CD8-positive, alpha-beta memory T cell (primary cell): ENCODE measurements at regions of chr9 and their contacts with region 1.

Region 1: GRCh38 chr9:113591001-113591898 is 127.7 kb downstream of the RGS3 start:
- DNase-seq: peak in 4 of 5 donors; percentile 17 to 49 (median 30)
- H3K4me3 ChIP-seq: no peak overlapping the region
- H3K4me3 Mint-ChIP-seq: no peak overlapping the region
- H3K27ac ChIP-seq: no peak overlapping the region
- H3K27ac Mint-ChIP-seq: peak overlapping the region in 5 of 8 donors; percentile 47 to 74 (median 66)
- H3K4me1 ChIP-seq: peaks cover 4% of the 10 kb centered on the region
- H3K4me1 Mint-ChIP-seq: peaks cover 20 to 35% (median 29%) of the 10 kb centered on the region in 3 donors
- H3K27me3 ChIP-seq: no peaks in the 10 kb centered on the region
- H3K27me3 Mint-ChIP-seq: no peaks in the 10 kb centered on the region

Region 2: DNA sequence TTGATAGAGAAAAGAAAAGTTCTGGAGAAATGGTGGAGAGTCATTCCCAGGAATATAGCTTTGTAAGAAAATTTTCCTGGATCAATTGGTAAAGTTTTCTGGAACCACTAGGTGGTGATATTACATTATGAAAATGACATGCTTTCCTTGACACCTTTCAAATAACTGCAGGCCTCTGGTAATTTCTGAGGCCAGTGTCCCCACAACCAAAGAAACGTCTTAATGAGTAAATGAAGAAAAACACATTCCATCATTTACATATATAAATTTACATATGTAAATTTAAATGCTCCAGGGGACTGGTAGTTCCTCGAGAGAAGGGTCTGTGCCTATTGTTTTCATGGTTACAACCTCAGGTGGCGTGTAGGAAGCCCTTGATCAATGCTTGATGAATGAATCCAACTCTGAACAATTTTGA is 144.9 kb before region 1 on chr9:
- CTCF ChIA-PET with region 1: interaction called, 45 read pairs
- POLR2A ChIA-PET with region 1: no interaction called
- DNase-seq: peak in 2 of 5 donors; percentile 34 to 40
- H3K4me3 ChIP-seq: no peak overlapping the region
- H3K4me3 Mint-ChIP-seq: no peak overlapping the region
- H3K27ac ChIP-seq: no peak overlapping the region
- H3K27ac Mint-ChIP-seq: no peak overlapping the region
- H3K4me1 ChIP-seq: no peaks in the 10 kb centered on the region
- H3K4me1 Mint-ChIP-seq: no peaks in the 10 kb centered on the region
- H3K27me3 ChIP-seq: no peaks in the 10 kb centered on the region
- H3K27me3 Mint-ChIP-seq: peaks cover 1 to 3% of the 10 kb centered on the region in 2 donors

Region 3: GRCh38 chr9:113622600-113623400 is 31.6 kb after region 1 on chr9:
- CTCF ChIA-PET with region 1: no interaction called
- POLR2A ChIA-PET with region 1: no interaction called
- DNase-seq: no peak
- H3K4me3 ChIP-seq: no peak overlapping the region
- H3K4me3 Mint-ChIP-seq: no peak overlapping the region
- H3K27ac ChIP-seq: no peak overlapping the region
- H3K27ac Mint-ChIP-seq: no peak overlapping the region
- H3K4me1 ChIP-seq: no peaks in the 10 kb centered on the region
- H3K4me1 Mint-ChIP-seq: no peaks in the 10 kb centered on the region
- H3K27me3 ChIP-seq: no peaks in the 10 kb centered on the region
- H3K27me3 Mint-ChIP-seq: peaks cover 19 to 21% of the 10 kb centered on the region in 2 donors

Region 4: DNA sequence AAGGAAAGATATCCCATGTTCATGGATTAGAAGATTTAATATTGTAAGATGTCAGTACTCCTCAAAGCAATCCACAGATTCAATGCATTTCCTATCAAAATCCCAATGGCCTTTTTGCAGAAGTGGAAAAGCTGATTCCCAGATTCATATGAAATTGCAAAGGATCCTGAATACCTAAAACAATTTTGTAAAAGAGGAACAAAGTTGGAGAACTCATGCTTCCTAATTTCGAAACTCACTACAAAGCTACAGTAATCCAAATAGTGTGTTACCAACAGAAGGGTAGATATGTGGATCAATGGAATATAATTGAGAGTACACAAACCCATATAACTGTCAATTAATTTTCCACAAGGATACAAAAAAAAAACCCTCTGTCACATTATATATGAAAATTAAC is 130.6 kb after region 1 on chr9:
- CTCF ChIA-PET with region 1: no interaction called
- POLR2A ChIA-PET with region 1: no interaction called
- DNase-seq: no peak
- H3K4me3 ChIP-seq: no peak overlapping the region
- H3K4me3 Mint-ChIP-seq: no peak overlapping the region
- H3K27ac ChIP-seq: no peak overlapping the region
- H3K27ac Mint-ChIP-seq: no peak overlapping the region
- H3K4me1 ChIP-seq: no peaks in the 10 kb centered on the region
- H3K4me1 Mint-ChIP-seq: no peaks in the 10 kb centered on the region
- H3K27me3 ChIP-seq: no peaks in the 10 kb centered on the region
- H3K27me3 Mint-ChIP-seq: peaks cover 6 to 32% of the 10 kb centered on the region in 2 donors

Region 5: GRCh38 chr9:114027159-114027895 is 436.1 kb after region 1 on chr9:
- CTCF ChIA-PET with region 1: no interaction called
- POLR2A ChIA-PET with region 1: no interaction called
- DNase-seq: no peak
- H3K4me3 ChIP-seq: no peak overlapping the region
- H3K4me3 Mint-ChIP-seq: no peak overlapping the region
- H3K27ac ChIP-seq: no peak overlapping the region
- H3K27ac Mint-ChIP-seq: no peak overlapping the region
- H3K4me1 ChIP-seq: no peaks in the 10 kb centered on the region
- H3K4me1 Mint-ChIP-seq: no peaks in the 10 kb centered on the region
- H3K27me3 ChIP-seq: no peaks in the 10 kb centered on the region
- H3K27me3 Mint-ChIP-seq: peaks cover 3 to 4% of the 10 kb centered on the region in 2 donors